ENCODE measurements at regions of chr4 and their contacts with region 1.

Region 1: GRCh38 chr4:742742-743311 is 37.2 kb downstream of the PCGF3 start:
- DNase-seq: peak; percentile 53 to 87 (median 78)
- ATAC-seq: peak; percentile 90
- H3K4me3 ChIP-seq: no peak overlapping the region
- H3K4me3 Mint-ChIP-seq: no peak overlapping the region
- H3K27ac ChIP-seq: no peak overlapping the region
- H3K27ac Mint-ChIP-seq: no peak overlapping the region
- H3K4me1 ChIP-seq: no peaks in the 10 kb centered on the region
- H3K4me1 Mint-ChIP-seq: peaks cover under 1% of the 10 kb centered on the region
- H3K27me3 ChIP-seq: no peaks in the 10 kb centered on the region
- H3K27me3 Mint-ChIP-seq: no peaks in the 10 kb centered on the region
- CTCF ChIP-seq: peak; percentile 93

Region 2: GRCh38 chr4:256492-256891 is 486.3 kb before region 1 on chr4:
- CTCF ChIA-PET with region 1: no interaction called
- POLR2A ChIA-PET with region 1: no interaction called
- intact Hi-C with region 1: no loop called
- DNase-seq: no peak
- ATAC-seq: no peak
- H3K4me3 ChIP-seq: no peak overlapping the region
- H3K4me3 Mint-ChIP-seq: no peak overlapping the region
- H3K27ac ChIP-seq: no peak overlapping the region
- H3K27ac Mint-ChIP-seq: no peak overlapping the region
- H3K4me1 ChIP-seq: no peaks in the 10 kb centered on the region
- H3K4me1 Mint-ChIP-seq: no peaks in the 10 kb centered on the region
- H3K27me3 ChIP-seq: no peaks in the 10 kb centered on the region
- H3K27me3 Mint-ChIP-seq: no peaks in the 10 kb centered on the region
- CTCF ChIP-seq: no peak

Region 3: DNA sequence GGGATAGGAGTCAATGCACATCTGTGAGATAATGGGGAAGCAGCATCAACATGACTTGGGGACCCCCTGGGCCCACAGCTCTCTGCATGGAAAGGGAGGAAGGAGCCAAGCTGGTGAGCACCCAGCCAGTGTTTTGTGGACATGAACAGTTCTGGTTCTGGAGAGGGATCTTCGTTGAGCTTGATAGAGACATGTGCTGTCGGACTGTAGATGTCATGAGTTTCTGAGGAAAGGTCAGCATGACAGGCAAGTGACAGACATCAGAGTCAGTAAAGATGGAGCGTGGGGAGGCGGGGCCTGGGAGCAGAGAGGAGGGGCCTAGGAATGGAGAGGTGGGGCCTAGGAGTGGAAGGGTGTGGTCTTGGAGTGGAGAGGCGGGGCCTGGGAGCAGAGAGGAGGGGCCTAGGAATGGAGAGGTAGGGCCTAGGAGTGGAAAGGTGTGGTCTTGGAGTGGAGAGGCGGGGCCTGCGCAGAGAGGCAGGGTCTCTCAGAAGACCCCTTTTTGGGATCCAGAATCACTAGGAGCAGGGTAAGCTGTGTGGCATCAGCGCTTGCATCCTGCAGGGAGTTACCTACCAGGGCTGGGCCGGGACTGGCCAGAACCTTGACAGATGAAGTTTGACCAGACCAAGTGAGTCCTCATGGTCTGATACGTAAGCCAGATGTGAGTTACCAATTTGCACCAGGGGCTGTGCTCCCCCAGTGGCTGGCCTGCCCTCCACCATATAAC is 210.1 kb before region 1 on chr4:
- CTCF ChIA-PET with region 1: no interaction called
- POLR2A ChIA-PET with region 1: no interaction called
- intact Hi-C with region 1: no loop called
- DNase-seq: no peak
- ATAC-seq: no peak
- H3K4me3 ChIP-seq: no peak overlapping the region
- H3K4me3 Mint-ChIP-seq: no peak overlapping the region
- H3K27ac ChIP-seq: no peak overlapping the region
- H3K27ac Mint-ChIP-seq: no peak overlapping the region
- H3K4me1 ChIP-seq: no peaks in the 10 kb centered on the region
- H3K4me1 Mint-ChIP-seq: no peaks in the 10 kb centered on the region
- H3K27me3 ChIP-seq: no peaks in the 10 kb centered on the region
- H3K27me3 Mint-ChIP-seq: no peaks in the 10 kb centered on the region
- CTCF ChIP-seq: no peak

Region 4: GRCh38 chr4:757111-757510 is 14.3 kb after region 1 on chr4:
- CTCF ChIA-PET with region 1: interaction called, 15 read pairs
- POLR2A ChIA-PET with region 1: interaction called, 3 read pairs
- intact Hi-C with region 1: no loop called
- DNase-seq: no peak
- ATAC-seq: no peak
- H3K4me3 ChIP-seq: no peak overlapping the region
- H3K4me3 Mint-ChIP-seq: no peak overlapping the region
- H3K27ac ChIP-seq: no peak overlapping the region
- H3K27ac Mint-ChIP-seq: no peak overlapping the region
- H3K4me1 ChIP-seq: no peaks in the 10 kb centered on the region
- H3K4me1 Mint-ChIP-seq: peaks cover 10% of the 10 kb centered on the region
- H3K27me3 ChIP-seq: no peaks in the 10 kb centered on the region
- H3K27me3 Mint-ChIP-seq: no peaks in the 10 kb centered on the region
- CTCF ChIP-seq: no peak

Region 5: GRCh38 chr4:845233-845835 is 102.5 kb after region 1 on chr4:
- CTCF ChIA-PET with region 1: no interaction called
- POLR2A ChIA-PET with region 1: no interaction called
- intact Hi-C with region 1: no loop called
- DNase-seq: no peak
- ATAC-seq: no peak
- H3K4me3 ChIP-seq: no peak overlapping the region
- H3K4me3 Mint-ChIP-seq: no peak overlapping the region
- H3K27ac ChIP-seq: no peak overlapping the region
- H3K27ac Mint-ChIP-seq: no peak overlapping the region
- H3K4me1 ChIP-seq: no peaks in the 10 kb centered on the region
- H3K4me1 Mint-ChIP-seq: no peaks in the 10 kb centered on the region
- H3K27me3 ChIP-seq: no peaks in the 10 kb centered on the region
- H3K27me3 Mint-ChIP-seq: no peaks in the 10 kb centered on the region
- CTCF ChIP-seq: no peak

Region 6: GRCh38 chr4:931960-932712 is 189.3 kb after region 1 on chr4 and contains the starts of genes GAK and TMEM175:
- CTCF ChIA-PET with region 1: interaction called, 8 read pairs
- POLR2A ChIA-PET with region 1: no interaction called
- intact Hi-C with region 1: loop called in 1 of 2 experiments (anchors 5 kb)
- DNase-seq: peak; percentile 90 to 99 (median 96)
- ATAC-seq: peak; percentile 91
- H3K4me3 ChIP-seq: peak within 1 kb of the TSS; percentile 91 to 96
- H3K4me3 Mint-ChIP-seq: peak within 1 kb of the TSS; percentile 96
- H3K27ac ChIP-seq: peak within 1 kb of the TSS; percentile 91 to 92
- H3K27ac Mint-ChIP-seq: peak within 1 kb of the TSS; percentile 97
- H3K4me1 ChIP-seq: peaks cover 39% of the 10 kb centered on the region
- H3K4me1 Mint-ChIP-seq: peaks cover 51% of the 10 kb centered on the region
- H3K27me3 ChIP-seq: no peaks in the 10 kb centered on the region
- H3K27me3 Mint-ChIP-seq: no peaks in the 10 kb centered on the region
- CTCF ChIP-seq: no peak
- total RNA-seq, gene GAK: 161 to 162 TPM
- total RNA-seq, gene TMEM175: 44.9 to 47.2 TPM

Region 7: GRCh38 chr4:986879-987623 is 244.2 kb after region 1 on chr4 and contains the start of gene IDUA:
- CTCF ChIA-PET with region 1: interaction called, 44 read pairs
- POLR2A ChIA-PET with region 1: interaction called, 11 read pairs
- intact Hi-C with region 1: loop called (anchors 2 kb)
- DNase-seq: peak; percentile 76 to 94 (median 87)
- ATAC-seq: peak; percentile 85
- H3K4me3 ChIP-seq: peak within 1 kb of the TSS; percentile 64 to 89
- H3K4me3 Mint-ChIP-seq: peak within 1 kb of the TSS; percentile 89
- H3K27ac ChIP-seq: peak within 1 kb of the TSS; percentile 62 to 65
- H3K27ac Mint-ChIP-seq: peak within 1 kb of the TSS; percentile 91
- H3K4me1 ChIP-seq: peaks cover 35% of the 10 kb centered on the region
- H3K4me1 Mint-ChIP-seq: peaks cover 31% of the 10 kb centered on the region
- H3K27me3 ChIP-seq: no peaks in the 10 kb centered on the region
- H3K27me3 Mint-ChIP-seq: no peaks in the 10 kb centered on the region
- CTCF ChIP-seq: peak; percentile 61
- total RNA-seq, gene IDUA: 54.3 to 62.0 TPM

Region 8: GRCh38 chr4:1072830-1073446 is 330.1 kb after region 1 on chr4:
- CTCF ChIA-PET with region 1: interaction called, 3 read pairs
- POLR2A ChIA-PET with region 1: no interaction called
- intact Hi-C with region 1: loop called (anchors 2 to 5 kb)
- DNase-seq: peak; percentile 21 to 75 (median 56)
- ATAC-seq: peak; percentile 97
- H3K4me3 ChIP-seq: no peak overlapping the region
- H3K4me3 Mint-ChIP-seq: no peak overlapping the region
- H3K27ac ChIP-seq: no peak overlapping the region
- H3K27ac Mint-ChIP-seq: peak overlapping the region; percentile 37
- H3K4me1 ChIP-seq: peaks cover 11% of the 10 kb centered on the region
- H3K4me1 Mint-ChIP-seq: peaks cover 12% of the 10 kb centered on the region
- H3K27me3 ChIP-seq: no peaks in the 10 kb centered on the region
- H3K27me3 Mint-ChIP-seq: peaks cover 15% of the 10 kb centered on the region
- CTCF ChIP-seq: peak; percentile 62

Region 9: GRCh38 chr4:1628892-1629698 is 886.3 kb after region 1 on chr4:
- CTCF ChIA-PET with region 1: no interaction called
- POLR2A ChIA-PET with region 1: no interaction called
- intact Hi-C with region 1: loop called in 1 of 2 experiments (anchors 5 kb)
- DNase-seq: peak; percentile 51 to 81 (median 69)
- ATAC-seq: peak; percentile 93
- H3K4me3 ChIP-seq: no peak overlapping the region
- H3K4me3 Mint-ChIP-seq: no peak overlapping the region
- H3K27ac ChIP-seq: no peak overlapping the region
- H3K27ac Mint-ChIP-seq: no peak overlapping the region
- H3K4me1 ChIP-seq: no peaks in the 10 kb centered on the region
- H3K4me1 Mint-ChIP-seq: no peaks in the 10 kb centered on the region
- H3K27me3 ChIP-seq: no peaks in the 10 kb centered on the region
- H3K27me3 Mint-ChIP-seq: no peaks in the 10 kb centered on the region
- CTCF ChIP-seq: peak; percentile 95

Measured in CD8-positive, alpha-beta T cell (primary cell).